OCI-LY7 (cell line): ENCODE measurements at regions of chr4 and their contacts with region 1.

Region 1: DNA sequence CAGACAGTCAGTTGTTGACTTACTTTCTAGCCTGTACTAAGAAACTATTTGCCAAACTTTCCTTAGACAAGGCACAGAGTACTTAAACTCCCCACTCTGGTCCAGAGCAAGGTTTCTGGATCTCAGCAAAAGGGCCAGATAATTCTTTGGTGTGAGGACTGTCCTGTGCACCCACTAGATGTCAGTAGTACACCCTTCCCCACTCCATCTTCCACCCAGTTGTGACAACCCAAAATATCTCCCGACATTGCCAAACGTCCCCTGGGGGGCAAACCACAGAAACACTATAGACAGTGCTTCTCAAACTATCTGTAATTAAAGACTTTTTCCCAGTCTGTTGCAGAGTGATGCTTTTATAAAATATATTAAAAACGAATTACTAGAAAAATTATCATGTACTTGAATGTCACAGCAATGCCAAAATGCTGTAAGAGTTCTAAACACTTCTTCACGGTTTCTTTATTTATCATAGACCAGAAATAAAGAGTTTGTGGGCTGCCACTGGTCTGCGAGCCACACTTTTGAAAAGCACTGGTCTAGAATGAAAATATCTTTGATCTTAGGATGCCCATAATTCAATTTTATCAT is 203.5 kb downstream of the PRDM5 start:
- DNase-seq: peak; percentile 82
- H3K4me3 ChIP-seq: peak overlapping the region; percentile 32
- H3K27ac ChIP-seq: peak overlapping the region; percentile 70
- H3K4me1 ChIP-seq: peaks cover 49% of the 10 kb centered on the region
- CTCF ChIP-seq: peak; percentile 98

Region 2: GRCh38 chr4:120037411-120037810 is 681.7 kb before region 1 on chr4:
- CTCF ChIA-PET with region 1: no interaction called
- POLR2A ChIA-PET with region 1: no interaction called
- intact Hi-C with region 1: no loop called
- DNase-seq: no peak
- H3K4me3 ChIP-seq: no peak overlapping the region
- H3K27ac ChIP-seq: no peak overlapping the region
- H3K4me1 ChIP-seq: no peaks in the 10 kb centered on the region
- CTCF ChIP-seq: no peak

Region 3: GRCh38 chr4:120156120-120156718 is 562.9 kb before region 1 on chr4:
- CTCF ChIA-PET with region 1: no interaction called
- POLR2A ChIA-PET with region 1: interaction called, 5 read pairs
- intact Hi-C with region 1: loop called (anchors 1 kb)
- DNase-seq: peak; percentile 81
- H3K4me3 ChIP-seq: no peak overlapping the region
- H3K27ac ChIP-seq: no peak overlapping the region
- H3K4me1 ChIP-seq: peaks cover 5% of the 10 kb centered on the region
- CTCF ChIP-seq: peak; percentile 91

Region 4: GRCh38 chr4:120749445-120750151 is 30.5 kb after region 1 on chr4:
- CTCF ChIA-PET with region 1: interaction called, 10 read pairs
- POLR2A ChIA-PET with region 1: interaction called, 34 read pairs
- intact Hi-C with region 1: loop called (anchors 2 kb)
- DNase-seq: peak; percentile 98
- H3K4me3 ChIP-seq: peak overlapping the region; percentile 42
- H3K27ac ChIP-seq: peak overlapping the region; percentile 97
- H3K4me1 ChIP-seq: peaks cover 42% of the 10 kb centered on the region
- CTCF ChIP-seq: no peak; the same call in 1 of the 2 replicates

Region 5: GRCh38 chr4:120809518-120809917 is 90.4 kb after region 1 on chr4:
- CTCF ChIA-PET with region 1: no interaction called
- POLR2A ChIA-PET with region 1: interaction called, 4 read pairs
- intact Hi-C with region 1: loop called (anchors 1 kb)
- DNase-seq: peak; percentile 24
- H3K4me3 ChIP-seq: no peak overlapping the region
- H3K27ac ChIP-seq: no peak overlapping the region
- H3K4me1 ChIP-seq: no peaks in the 10 kb centered on the region
- CTCF ChIP-seq: peak; percentile 84

Region 6: GRCh38 chr4:120838784-120839183 is 119.7 kb after region 1 on chr4:
- CTCF ChIA-PET with region 1: no interaction called
- POLR2A ChIA-PET with region 1: no interaction called
- intact Hi-C with region 1: no loop called
- DNase-seq: no peak
- H3K4me3 ChIP-seq: no peak overlapping the region
- H3K27ac ChIP-seq: no peak overlapping the region
- H3K4me1 ChIP-seq: no peaks in the 10 kb centered on the region
- CTCF ChIP-seq: no peak

Region 7: DNA sequence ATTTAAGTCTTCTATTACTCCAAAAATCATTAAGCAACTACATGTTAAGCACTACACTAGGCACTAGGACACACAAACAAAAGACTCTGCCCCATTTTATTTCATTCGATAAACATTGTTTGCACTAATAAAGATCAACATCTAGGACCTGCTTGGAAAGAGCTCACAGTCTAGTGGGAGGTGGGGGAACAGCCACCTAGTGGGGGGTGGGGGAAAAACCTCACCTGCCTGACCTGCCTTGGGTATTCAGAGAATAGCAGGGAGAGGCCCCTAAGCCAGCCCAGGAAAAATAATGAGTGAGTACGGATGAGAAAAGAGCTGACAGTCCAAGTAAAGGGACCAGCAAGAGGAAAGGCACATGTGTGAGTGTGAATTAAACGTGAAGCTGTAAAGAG is 151.2 kb after region 1 on chr4:
- CTCF ChIA-PET with region 1: interaction called, 7 read pairs
- POLR2A ChIA-PET with region 1: interaction called, 6 read pairs
- intact Hi-C with region 1: loop called (anchors 1 kb)
- DNase-seq: peak; percentile 50
- H3K4me3 ChIP-seq: no peak overlapping the region
- H3K27ac ChIP-seq: no peak overlapping the region
- H3K4me1 ChIP-seq: peaks cover 24% of the 10 kb centered on the region
- CTCF ChIP-seq: peak; percentile 78

Region 8: DNA sequence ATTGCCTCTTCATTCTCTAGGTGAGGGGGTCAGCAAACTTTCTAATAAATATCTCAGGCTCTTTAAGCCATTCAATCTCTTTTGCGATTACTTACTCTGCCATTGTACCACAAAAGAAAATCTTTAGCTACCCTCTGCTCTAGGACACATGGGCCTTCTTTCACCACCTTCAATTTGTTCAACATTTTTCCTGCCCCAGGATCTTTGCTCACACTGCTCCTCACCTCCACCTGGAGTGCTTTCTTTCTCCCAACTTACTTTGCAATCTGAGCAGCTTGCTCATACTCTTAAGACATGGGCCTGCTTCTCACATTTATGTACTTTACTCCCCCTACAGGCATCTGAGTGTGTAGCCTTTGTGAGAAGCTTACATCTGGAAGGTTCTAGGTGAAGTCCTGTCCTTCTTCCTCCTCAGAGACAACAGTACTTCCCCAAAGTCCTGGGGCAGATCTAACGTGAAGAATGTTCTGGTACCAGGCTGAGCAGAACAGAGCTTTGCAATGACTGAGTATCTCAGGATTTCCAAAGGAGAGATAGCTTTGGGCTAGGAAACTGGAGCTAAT is 258.4 kb after region 1 on chr4:
- CTCF ChIA-PET with region 1: interaction called, 3 read pairs
- POLR2A ChIA-PET with region 1: interaction called, 3 read pairs
- intact Hi-C with region 1: loop called (anchors 1 kb)
- DNase-seq: peak; percentile 70
- H3K4me3 ChIP-seq: no peak overlapping the region
- H3K27ac ChIP-seq: no peak overlapping the region
- H3K4me1 ChIP-seq: no peaks in the 10 kb centered on the region
- CTCF ChIP-seq: peak; percentile 79

Region 9: DNA sequence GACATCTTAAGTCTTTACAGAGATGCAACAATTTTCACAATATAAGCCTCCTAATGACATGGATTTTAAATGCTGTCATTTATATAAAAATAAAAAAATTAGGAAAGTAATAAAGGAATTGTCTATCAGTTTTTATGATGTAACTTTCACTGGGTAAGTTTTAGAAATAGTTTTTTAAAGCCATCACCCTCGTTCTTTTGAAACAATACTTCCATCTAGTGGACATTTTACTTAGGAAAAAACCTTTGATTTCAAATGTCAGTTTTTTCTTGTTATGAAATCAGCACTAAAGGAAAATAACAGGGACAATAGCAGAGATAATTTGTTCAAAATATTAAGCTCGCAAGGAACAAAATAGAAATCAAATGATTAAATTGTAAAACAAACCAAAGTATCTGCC is 377.6 kb after region 1 on chr4:
- CTCF ChIA-PET with region 1: no interaction called
- POLR2A ChIA-PET with region 1: no interaction called
- intact Hi-C with region 1: loop called (anchors 1 kb)
- DNase-seq: peak; percentile 37
- H3K4me3 ChIP-seq: no peak overlapping the region
- H3K27ac ChIP-seq: no peak overlapping the region
- H3K4me1 ChIP-seq: no peaks in the 10 kb centered on the region
- CTCF ChIP-seq: peak; percentile 83

Region 10: GRCh38 chr4:121243485-121243884 is 524.4 kb after region 1 on chr4:
- CTCF ChIA-PET with region 1: no interaction called
- POLR2A ChIA-PET with region 1: no interaction called
- intact Hi-C with region 1: no loop called
- DNase-seq: no peak
- H3K4me3 ChIP-seq: no peak overlapping the region
- H3K27ac ChIP-seq: no peak overlapping the region
- H3K4me1 ChIP-seq: no peaks in the 10 kb centered on the region
- CTCF ChIP-seq: no peak